Aorta (tissue), 5 donors: ENCODE measurements at regions of chr6 and their contacts with region 1.

Region 1: DNA sequence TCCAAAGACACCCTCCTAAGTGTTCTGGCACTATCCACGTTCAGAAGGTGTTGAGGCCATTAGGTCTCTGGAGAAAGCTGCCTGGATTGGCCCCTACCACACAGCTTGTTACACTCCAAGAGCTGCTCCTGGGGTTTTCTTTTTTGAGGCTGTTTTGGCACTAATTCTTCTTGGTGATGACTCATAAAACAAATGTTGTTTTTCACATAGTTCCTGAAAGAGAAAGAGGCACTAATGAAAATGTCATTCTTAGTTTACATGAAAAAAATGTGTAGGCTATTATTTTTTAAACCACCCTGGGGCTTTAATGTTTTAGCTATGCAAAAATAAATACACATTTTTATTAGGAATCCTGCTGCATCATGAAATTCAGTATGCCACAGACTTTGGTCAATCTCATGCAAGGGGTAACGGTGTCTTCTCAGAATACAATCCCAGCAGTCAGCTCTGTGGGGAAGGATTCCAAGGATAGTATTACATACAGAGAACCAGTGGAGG is 38.1 kb downstream of the TBPL1 start:
- DNase-seq: no peak
- ATAC-seq: peak; percentile 68
- H3K4me3 ChIP-seq: no peak overlapping the region
- H3K27ac ChIP-seq: peak overlapping the region in 1 of 2 donors; percentile 68
- H3K4me1 ChIP-seq: peaks cover 0 to 3% of the 10 kb centered on the region in 2 donors
- H3K27me3 ChIP-seq: no peaks in the 10 kb centered on the region

Region 2: GRCh38 chr6:134604014-134604676 is 613.0 kb after region 1 on chr6:
- intact Hi-C with region 1: no loop called
- DNase-seq: no peak
- ATAC-seq: peak; percentile 29
- H3K4me3 ChIP-seq: no peak overlapping the region
- H3K27ac ChIP-seq: no peak overlapping the region
- H3K4me1 ChIP-seq: no peaks in the 10 kb centered on the region
- H3K27me3 ChIP-seq: no peaks in the 10 kb centered on the region

Region 3: GRCh38 chr6:134830940-134831339 is 839.8 kb after region 1 on chr6:
- intact Hi-C with region 1: loop called in 1 of 2 experiments (anchors 5 kb)
- DNase-seq: no peak
- ATAC-seq: no peak
- H3K4me3 ChIP-seq: no peak overlapping the region
- H3K27ac ChIP-seq: no peak overlapping the region
- H3K4me1 ChIP-seq: peaks cover 4 to 5% of the 10 kb centered on the region in 2 donors
- H3K27me3 ChIP-seq: no peaks in the 10 kb centered on the region